OCI-LY7 (cell line): ENCODE measurements at regions of chr3 and their contacts with region 1.

Region 1: GRCh38 chr3:99909714-99910494 is 92.2 kb downstream of the CMSS1 start:
- DNase-seq: no peak
- H3K4me3 ChIP-seq: no peak overlapping the region
- H3K27ac ChIP-seq: no peak overlapping the region
- H3K4me1 ChIP-seq: no peaks in the 10 kb centered on the region
- CTCF ChIP-seq: no peak

Region 2: DNA sequence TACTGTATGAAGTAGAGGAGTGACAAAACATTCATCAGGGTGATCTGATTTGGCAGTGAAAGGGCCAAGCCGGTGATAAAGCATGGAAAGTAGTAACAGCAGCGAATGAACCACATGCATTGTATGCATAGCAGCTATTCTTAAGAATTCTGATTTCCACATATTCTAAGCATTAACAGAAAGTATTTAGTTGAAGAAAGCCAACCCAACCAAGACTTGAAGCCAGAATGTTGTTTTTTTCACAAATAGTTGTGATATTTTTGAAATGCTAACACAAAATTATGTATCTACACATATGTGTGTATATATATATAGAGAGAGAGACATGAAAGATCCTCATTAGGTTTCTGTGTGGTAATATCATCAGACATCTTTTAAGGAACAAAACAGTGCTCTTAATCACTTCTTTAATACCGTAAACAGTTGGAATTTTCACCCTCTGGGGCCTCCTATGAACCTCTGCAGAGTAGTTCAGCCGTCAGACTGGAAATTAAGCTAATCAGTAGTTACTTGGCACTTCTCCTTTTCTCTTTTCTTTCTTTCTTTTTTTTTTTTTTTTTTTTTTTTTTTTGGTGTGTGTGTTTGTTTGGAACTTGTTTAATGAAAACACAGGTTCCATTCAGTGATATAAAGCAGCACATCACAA is 47.4 kb after region 1 on chr3:
- CTCF ChIA-PET with region 1: no interaction called
- POLR2A ChIA-PET with region 1: interaction called, 11 read pairs
- intact Hi-C with region 1: no loop called
- DNase-seq: no peak
- H3K4me3 ChIP-seq: no peak overlapping the region
- H3K27ac ChIP-seq: no peak overlapping the region
- H3K4me1 ChIP-seq: no peaks in the 10 kb centered on the region
- CTCF ChIP-seq: no peak

Region 3: DNA sequence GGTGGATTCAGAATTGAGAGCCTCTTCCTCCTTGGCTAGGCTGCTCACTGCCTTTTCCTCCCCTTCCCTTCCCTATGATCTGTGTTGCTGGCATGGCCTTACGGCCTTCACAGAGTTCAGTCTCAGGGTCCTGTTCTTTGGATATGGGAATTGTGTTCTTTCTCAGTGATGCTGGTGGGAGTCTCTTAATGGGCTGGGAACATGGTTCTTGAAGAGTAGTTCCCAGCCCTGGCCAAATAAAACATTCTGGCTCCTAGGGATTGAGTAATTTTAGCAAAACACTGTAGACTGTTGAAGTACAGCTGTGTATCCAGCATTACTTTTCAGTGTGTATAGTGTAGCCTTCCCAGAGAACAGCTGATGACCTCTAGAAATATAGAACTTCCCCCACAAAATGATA is 227.0 kb after region 1 on chr3:
- CTCF ChIA-PET with region 1: no interaction called
- POLR2A ChIA-PET with region 1: no interaction called
- intact Hi-C with region 1: no loop called
- DNase-seq: no peak
- H3K4me3 ChIP-seq: no peak overlapping the region
- H3K27ac ChIP-seq: no peak overlapping the region
- H3K4me1 ChIP-seq: no peaks in the 10 kb centered on the region
- CTCF ChIP-seq: no peak